ENCODE measurements at regions of chr2 and their contacts with region 1.

Region 1: GRCh38 chr2:226215902-226216503 is 583.6 kb downstream of the IRS1 start:
- DNase-seq: peak; percentile 41
- H3K4me3 Mint-ChIP-seq: no peak overlapping the region
- H3K27ac Mint-ChIP-seq: no peak overlapping the region
- H3K4me1 Mint-ChIP-seq: peaks cover 6% of the 10 kb centered on the region
- H3K27me3 Mint-ChIP-seq: peaks cover 11% of the 10 kb centered on the region

Region 2: DNA sequence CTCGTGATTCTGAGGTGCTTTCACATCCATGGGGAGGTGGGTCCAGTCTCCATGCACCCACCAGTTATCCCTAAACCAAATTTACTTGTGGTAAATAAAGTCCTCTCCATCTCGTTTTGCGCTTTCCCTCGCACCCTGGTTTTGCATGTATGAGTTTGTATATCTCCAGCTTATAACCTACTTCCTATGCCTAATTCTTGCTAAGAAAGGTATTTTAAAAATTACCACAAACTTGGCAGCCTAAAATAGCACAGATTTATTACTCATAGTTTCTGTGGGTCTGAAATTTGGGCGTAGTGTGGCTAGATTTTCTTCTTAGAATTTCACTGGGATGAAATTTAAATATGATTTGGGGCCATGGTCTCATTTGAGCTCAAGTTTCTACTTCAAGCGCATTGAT is 305.0 kb before region 1 on chr2:
- intact Hi-C with region 1: no loop called
- DNase-seq: no peak
- H3K4me3 Mint-ChIP-seq: no peak overlapping the region
- H3K27ac Mint-ChIP-seq: no peak overlapping the region
- H3K4me1 Mint-ChIP-seq: no peaks in the 10 kb centered on the region
- H3K27me3 Mint-ChIP-seq: peaks cover 4% of the 10 kb centered on the region

Region 3: DNA sequence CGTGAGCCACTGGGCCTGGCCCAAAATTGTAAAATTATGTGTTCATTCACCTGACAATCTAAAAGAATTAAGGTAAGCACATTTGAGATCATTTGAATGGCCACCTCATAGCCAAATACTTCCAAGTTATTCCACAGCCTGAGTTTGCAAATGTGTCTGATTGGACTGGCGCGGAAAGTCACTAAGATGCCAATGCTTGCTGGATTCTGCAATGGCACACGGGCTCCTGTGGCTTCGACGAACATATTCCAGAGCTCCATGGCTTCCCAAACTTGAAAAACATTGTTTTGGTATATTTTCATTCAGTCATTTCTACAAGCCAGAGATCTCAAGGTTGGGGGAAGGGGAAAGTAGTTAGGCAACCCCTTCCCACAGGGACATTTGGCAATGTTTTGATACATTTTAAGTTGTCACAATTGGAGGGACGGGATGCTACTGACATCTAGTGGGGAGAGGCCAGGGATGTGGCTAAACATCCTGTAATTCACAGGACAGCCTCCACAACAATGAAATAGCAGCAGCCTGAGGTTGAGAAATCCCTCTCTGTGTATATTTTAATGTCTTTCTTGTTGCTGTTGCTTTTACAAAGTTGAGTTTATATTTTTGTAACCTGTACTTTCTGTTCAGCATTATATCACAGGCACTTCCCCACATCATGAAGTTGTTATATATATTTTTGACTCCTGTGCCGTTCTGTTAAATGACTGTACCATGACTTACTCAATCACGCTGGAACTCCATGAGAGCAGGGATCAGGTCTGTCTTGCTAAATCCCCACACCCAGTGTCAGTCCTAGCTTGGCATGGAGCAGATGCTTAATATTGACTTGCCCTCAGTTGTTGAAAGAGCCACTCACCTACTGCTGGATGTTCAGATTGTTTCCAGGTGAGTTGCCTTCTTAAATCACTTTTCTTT is 891.1 kb after region 1 on chr2:
- intact Hi-C with region 1: loop called (anchors 5 kb)
- DNase-seq: no peak
- H3K4me3 Mint-ChIP-seq: no peak overlapping the region
- H3K27ac Mint-ChIP-seq: no peak overlapping the region
- H3K4me1 Mint-ChIP-seq: no peaks in the 10 kb centered on the region
- H3K27me3 Mint-ChIP-seq: no peaks in the 10 kb centered on the region